Calu3 (cell line): ENCODE measurements at regions of chr2 and their contacts with region 1.

Region 1: DNA sequence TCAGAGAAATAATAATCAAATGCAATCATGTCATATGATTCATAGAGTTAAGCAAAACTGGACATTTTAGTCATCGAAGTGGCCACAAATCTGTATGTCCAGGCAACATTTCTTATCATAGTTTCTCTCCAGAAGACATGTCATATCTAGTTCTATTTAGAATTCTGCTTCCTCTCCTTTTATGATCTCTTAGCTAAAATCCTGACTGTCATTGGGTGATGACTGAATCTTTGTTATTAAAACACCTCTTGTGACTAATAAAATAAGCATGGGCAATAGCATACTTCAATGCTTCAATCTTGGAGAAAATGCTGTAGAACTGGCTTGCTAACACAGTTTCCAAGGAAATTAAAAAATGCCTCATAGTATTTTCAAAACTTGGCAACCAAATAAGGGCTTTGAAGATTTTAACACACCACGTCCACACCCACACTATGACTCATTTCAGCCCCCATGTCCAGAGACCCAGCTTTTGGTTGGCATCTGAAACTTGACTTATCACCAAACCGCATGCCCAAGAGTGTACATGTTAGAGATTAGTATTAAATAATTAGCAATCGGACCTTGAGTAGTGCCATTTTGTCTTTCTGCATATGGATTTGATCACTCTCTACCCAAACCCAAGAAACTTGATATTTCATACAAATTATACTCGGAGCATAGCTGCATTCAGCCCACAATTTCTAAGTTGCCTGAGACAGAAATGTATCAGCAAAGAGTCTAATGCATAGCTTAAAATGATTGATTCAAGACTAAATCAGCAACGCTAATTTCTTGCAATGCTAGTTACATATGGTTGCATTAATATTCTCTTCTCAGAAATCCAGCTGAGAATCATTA is 106.5 kb upstream of the ETAA1 start:
- DNase-seq: peak; percentile 72
- H3K4me3 Mint-ChIP-seq: peak overlapping the region; percentile 55
- H3K27ac Mint-ChIP-seq: peak overlapping the region; percentile 97
- H3K4me1 Mint-ChIP-seq: peaks cover 66% of the 10 kb centered on the region
- H3K27me3 Mint-ChIP-seq: no peaks in the 10 kb centered on the region
- CTCF ChIP-seq: no peak

Region 2: GRCh38 chr2:67037655-67038054 is 253.0 kb before region 1 on chr2:
- CTCF ChIA-PET with region 1: no interaction called
- intact Hi-C with region 1: loop called (anchors 10 kb)
- DNase-seq: peak; percentile 68
- H3K4me3 Mint-ChIP-seq: peak overlapping the region; percentile 27
- H3K27ac Mint-ChIP-seq: peak overlapping the region; percentile 66
- H3K4me1 Mint-ChIP-seq: peaks cover 73% of the 10 kb centered on the region
- H3K27me3 Mint-ChIP-seq: no peaks in the 10 kb centered on the region
- CTCF ChIP-seq: no peak

Region 3: GRCh38 chr2:67234439-67234838 is 56.2 kb before region 1 on chr2:
- CTCF ChIA-PET with region 1: interaction called, 3 read pairs
- intact Hi-C with region 1: loop called (anchors 2 kb)
- DNase-seq: peak; percentile 22
- H3K4me3 Mint-ChIP-seq: no peak overlapping the region
- H3K27ac Mint-ChIP-seq: no peak overlapping the region
- H3K4me1 Mint-ChIP-seq: peaks cover 33% of the 10 kb centered on the region
- H3K27me3 Mint-ChIP-seq: no peaks in the 10 kb centered on the region
- CTCF ChIP-seq: peak; percentile 28

Region 4: GRCh38 chr2:67322353-67323001 is 31.8 kb after region 1 on chr2:
- CTCF ChIA-PET with region 1: no interaction called
- intact Hi-C with region 1: loop called (anchors 1 kb)
- DNase-seq: peak; percentile 73
- H3K4me3 Mint-ChIP-seq: peak overlapping the region; percentile 12
- H3K27ac Mint-ChIP-seq: peak overlapping the region; percentile 87
- H3K4me1 Mint-ChIP-seq: peaks cover 29% of the 10 kb centered on the region
- H3K27me3 Mint-ChIP-seq: no peaks in the 10 kb centered on the region
- CTCF ChIP-seq: peak; percentile 71

Region 5: DNA sequence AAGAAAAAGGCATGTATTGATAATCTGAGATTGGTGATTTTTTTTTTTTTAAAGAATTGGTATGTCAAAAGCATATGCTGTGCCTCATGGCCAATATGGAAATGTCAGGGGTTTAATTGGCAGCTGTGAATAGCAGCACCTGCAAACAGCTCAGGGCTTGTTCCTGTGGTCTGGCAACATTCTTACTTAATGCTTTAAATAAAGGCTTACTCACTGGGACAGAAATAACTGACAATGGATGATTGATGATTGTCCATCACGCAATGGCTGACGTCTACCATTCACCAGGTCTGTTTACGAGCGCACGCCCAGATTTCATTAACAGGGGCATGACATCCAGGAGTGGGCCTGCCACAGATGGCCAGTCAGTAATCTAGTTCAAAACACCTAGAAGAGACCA is 173.1 kb after region 1 on chr2:
- CTCF ChIA-PET with region 1: no interaction called
- intact Hi-C with region 1: loop called (anchors 2 kb)
- DNase-seq: peak; percentile 79
- H3K4me3 Mint-ChIP-seq: peak overlapping the region; percentile 26
- H3K27ac Mint-ChIP-seq: peak overlapping the region; percentile 89
- H3K4me1 Mint-ChIP-seq: peaks cover 54% of the 10 kb centered on the region
- H3K27me3 Mint-ChIP-seq: no peaks in the 10 kb centered on the region
- CTCF ChIP-seq: no peak